ENCODE measurements at regions of chr15 and their contacts with region 1.

Region 1: DNA sequence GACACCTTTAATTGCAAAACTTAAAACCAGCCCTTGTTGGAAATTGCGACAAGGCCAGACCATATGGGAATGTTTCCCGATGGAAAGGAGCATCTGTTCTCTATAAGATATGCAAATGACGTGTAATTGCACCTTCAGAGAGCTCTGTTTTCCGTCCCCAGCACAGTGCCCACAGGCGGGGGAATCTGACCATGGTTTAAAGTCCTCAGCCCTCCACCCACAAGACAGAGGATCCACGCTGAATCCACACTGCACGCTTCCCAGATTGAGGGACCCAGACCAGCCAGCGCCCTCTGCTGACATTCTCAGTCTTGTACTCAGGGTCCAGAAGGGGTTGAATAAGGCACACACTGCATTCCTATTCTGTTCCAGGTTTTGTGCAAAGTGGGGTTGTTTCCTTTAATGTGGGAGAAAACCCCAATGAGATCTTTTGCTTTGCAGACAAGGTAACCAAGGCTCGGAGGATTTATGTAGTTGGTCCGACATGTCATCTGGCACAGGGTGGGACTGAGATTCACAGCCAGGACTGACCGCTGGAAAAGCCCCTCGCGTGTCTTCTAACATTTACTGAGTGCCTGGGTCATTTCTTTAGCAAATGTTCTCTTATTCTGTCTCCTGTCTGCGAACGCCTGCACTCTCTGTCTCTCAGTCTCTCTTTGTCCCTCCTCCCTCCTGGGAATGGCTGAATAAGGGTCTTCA is 36.8 kb upstream of the KLHL25 start:
- DNase-seq: peak; percentile 47 to 66
- ATAC-seq: peak; percentile 82 to 94 (median 87)
- H3K4me3 ChIP-seq: no peak overlapping the region
- H3K27ac ChIP-seq: no peak overlapping the region
- H3K4me1 ChIP-seq: peaks cover 0 to under 1% (median 0%) of the 10 kb centered on the region in 9 donors
- H3K27me3 ChIP-seq: peaks cover 0 to 3% (median 0%) of the 10 kb centered on the region in 7 donors
- CTCF ChIP-seq: peak; percentile 37 to 76 (median 65)

Region 2: DNA sequence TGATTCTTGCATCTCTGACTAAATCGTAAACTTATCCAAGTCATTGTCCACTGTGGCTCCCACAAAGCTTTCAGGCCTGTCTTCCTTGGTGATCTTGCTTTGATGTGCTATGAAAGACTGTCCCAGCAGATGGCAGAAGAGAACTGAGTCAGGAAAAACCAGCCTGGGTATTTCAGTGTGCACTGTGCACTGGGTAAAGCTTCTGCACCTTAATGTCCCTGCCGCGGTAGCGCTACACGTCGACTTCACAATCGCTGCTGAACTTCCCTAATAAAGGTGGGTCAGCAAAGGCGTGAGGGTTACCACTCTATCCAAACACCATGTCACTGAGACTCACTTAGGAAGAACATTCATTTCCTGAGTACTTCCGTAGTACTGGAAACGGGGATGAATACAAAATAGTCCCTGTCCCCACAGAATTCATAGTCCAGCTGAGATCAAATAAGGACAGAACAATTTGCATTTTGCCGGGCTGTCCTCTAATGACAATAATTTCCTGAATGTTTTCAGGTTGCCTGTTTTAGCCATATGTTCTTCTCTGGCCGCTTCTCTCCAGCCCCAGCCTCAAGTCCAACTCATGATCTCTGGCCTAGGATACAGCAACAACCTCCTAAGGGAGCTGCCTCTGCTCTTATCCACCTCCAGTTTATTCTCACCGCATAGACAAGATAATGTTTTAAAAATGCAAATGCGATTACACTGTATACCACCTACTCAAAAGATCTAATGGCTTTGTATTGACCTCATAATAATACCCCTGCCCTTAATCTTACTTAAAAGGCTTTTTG is 534.8 kb before region 1 on chr15:
- intact Hi-C with region 1: loop called in 4 of 10 experiments (anchors 5 to 10 kb)
- DNase-seq: peak; percentile 32 to 73
- ATAC-seq: peak; percentile 80 to 95 (median 92)
- H3K4me3 ChIP-seq: peak overlapping the region in 9 of 10 donors; percentile 10 to 46 (median 42)
- H3K27ac ChIP-seq: peak overlapping the region in 7 of 10 donors; percentile 7 to 39 (median 25)
- H3K4me1 ChIP-seq: peaks cover 0 to 15% (median 10%) of the 10 kb centered on the region in 9 donors
- H3K27me3 ChIP-seq: no peaks in the 10 kb centered on the region
- CTCF ChIP-seq: peak; percentile 49 to 85 (median 80)

Region 3: DNA sequence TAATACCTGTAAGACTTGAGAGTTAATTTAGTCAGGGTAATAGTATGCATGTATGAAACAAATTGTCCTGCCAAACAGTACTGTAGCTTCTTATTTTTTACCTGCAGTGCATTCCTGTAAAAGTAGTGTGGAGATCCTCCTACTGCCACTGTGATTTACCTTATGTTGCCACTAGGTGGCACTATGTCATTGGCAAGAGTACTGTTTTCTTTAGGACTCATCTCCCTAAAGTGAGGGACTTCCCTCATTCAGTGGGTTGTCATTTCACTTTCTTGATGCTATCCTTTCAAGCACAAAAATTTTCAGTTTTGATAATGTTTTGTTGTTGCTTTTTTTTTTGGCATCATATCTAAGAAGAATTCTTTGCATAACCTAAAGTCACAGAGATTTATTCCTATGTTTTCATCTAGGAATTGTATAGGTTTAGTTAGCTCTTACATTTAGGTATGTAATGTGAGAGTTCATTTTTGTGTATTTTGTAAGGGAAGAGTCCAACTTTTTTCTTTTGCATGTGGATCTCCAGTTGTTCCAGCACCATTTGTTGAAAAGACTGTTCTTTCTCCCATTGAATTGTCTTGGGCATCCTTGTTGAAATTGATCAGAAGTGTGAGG is 345.5 kb before region 1 on chr15:
- intact Hi-C with region 1: loop called in 4 of 10 experiments (anchors 10 kb)
- DNase-seq: peak in 1 of 2 donors; percentile 67
- ATAC-seq: peak; percentile 54 to 83 (median 76)
- H3K4me3 ChIP-seq: no peak overlapping the region
- H3K27ac ChIP-seq: peak overlapping the region in 1 of 10 donors; percentile 0
- H3K4me1 ChIP-seq: peaks cover 0 to 76% (median 51%) of the 10 kb centered on the region in 9 donors
- H3K27me3 ChIP-seq: no peaks in the 10 kb centered on the region
- CTCF ChIP-seq: peak; percentile 63 to 91 (median 82)

Region 4: GRCh38 chr15:85592148-85592547 is 239.4 kb before region 1 on chr15:
- intact Hi-C with region 1: loop called in 1 of 10 experiments (anchors 10 kb)
- DNase-seq: no peak
- ATAC-seq: peak in 7 of 8 donors; percentile 62 to 80 (median 68)
- H3K4me3 ChIP-seq: no peak overlapping the region
- H3K27ac ChIP-seq: peak overlapping the region in 9 of 10 donors; percentile 20 to 72 (median 59)
- H3K4me1 ChIP-seq: peaks cover 9 to 96% (median 80%) of the 10 kb centered on the region in 9 donors
- H3K27me3 ChIP-seq: no peaks in the 10 kb centered on the region
- CTCF ChIP-seq: peak in 7 of 9 donors; percentile 15 to 61 (median 39)

Region 5: DNA sequence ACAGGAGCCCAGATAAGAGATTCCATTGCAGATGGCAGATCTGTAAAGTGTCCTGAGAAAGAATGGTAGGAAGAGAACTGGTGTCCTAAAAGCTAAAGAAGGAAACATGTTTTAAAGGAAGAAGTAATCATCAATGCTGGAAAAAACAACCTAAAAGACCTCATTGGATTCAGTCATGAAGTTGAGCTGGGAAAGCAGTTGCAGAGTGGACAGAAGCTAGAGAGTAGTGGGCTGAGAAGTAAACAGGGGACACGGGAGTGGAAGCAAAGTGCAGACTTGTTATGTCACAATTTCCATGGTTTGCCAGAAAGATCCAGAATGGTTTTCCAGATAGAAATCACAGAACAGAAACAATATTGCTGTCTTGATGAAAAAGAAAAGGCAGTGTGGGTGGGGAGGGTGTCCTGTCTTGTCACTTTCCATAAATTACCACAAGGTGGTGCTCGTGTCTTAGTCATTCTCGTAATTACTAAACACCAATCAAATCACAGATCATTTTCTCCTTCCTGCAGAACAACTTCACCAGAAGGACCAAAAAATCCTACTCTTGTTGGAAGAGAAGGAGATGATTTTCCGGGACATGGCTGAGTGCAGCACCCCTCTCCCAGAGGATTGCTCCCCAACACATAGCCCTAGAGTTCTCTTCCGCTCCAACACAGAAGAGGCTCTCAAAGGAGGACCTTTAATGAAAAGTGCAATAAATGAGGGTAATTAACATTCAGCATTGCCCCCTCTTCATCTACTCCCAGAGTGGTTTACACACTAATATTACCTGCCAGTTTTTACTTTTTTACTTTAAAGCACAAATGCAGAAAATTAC is 101.4 kb before region 1 on chr15:
- intact Hi-C with region 1: loop called in 8 of 10 experiments (anchors 2 to 5 kb)
- DNase-seq: peak in 1 of 2 donors; percentile 60
- ATAC-seq: peak; percentile 35 to 74 (median 56)
- H3K4me3 ChIP-seq: no peak overlapping the region
- H3K27ac ChIP-seq: peak overlapping the region in 4 of 10 donors; percentile 5 to 78 (median 38)
- H3K4me1 ChIP-seq: peaks cover 0 to 34% (median 22%) of the 10 kb centered on the region in 9 donors
- H3K27me3 ChIP-seq: no peaks in the 10 kb centered on the region
- CTCF ChIP-seq: peak; percentile 54 to 81 (median 75)

Region 6: DNA sequence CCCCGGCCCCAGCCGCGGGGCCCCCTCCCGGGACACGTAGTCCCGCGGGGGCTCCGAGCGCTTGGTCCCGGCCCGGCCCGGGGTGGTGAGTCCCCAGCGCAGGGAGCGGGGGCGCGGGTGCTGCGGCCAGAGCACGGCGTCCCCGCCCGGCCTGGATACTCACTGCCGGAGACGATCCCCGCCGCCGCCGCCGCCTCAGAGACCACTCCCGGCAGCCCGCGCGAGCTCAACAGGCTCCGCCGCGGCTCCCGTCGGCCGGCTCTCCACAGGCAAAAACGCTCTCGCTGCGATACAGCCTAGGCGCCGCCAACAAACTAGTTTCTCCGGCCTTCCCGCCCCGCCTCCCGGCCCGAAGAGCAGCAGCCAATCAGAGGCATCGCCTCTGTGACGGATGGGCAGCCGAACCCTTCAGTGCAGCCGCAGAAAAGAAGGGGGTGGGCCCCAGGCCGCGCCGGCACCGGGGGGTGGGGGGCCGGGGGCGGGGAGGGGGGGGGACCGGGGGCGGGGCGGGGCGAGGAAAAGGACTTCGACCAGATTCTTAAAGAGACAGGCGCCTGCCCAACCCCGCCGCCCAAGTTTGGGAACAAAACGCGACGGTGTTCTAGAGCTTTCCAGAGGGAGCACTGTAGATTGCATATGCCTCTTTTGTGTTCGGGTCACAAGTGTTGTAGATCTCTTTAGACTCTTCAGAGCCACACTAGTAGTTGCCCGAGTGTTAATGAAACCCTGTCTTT is 36.8 kb before region 1 on chr15 and contains the start of gene KLHL25:
- intact Hi-C with region 1: loop called in 2 of 10 experiments (anchors 5 kb)
- DNase-seq: peak; percentile 94 to 95
- ATAC-seq: peak; percentile 96 to 98 (median 98)
- H3K4me3 ChIP-seq: peak within 1 kb of the TSS; percentile 73 to 98 (median 89)
- H3K27ac ChIP-seq: peak within 1 kb of the TSS; percentile 52 to 95 (median 90)
- H3K4me1 ChIP-seq: peaks cover 0 to 29% (median 24%) of the 10 kb centered on the region in 9 donors
- H3K27me3 ChIP-seq: peaks cover 0 to 9% (median 0%) of the 10 kb centered on the region in 7 donors
- CTCF ChIP-seq: no peak
- total RNA-seq, gene KLHL25: 1.9 to 4.6 (median 3.2) TPM

Region 7: GRCh38 chr15:85920956-85921355 is 89.4 kb after region 1 on chr15:
- intact Hi-C with region 1: no loop called
- DNase-seq: no peak
- ATAC-seq: no peak
- H3K4me3 ChIP-seq: no peak overlapping the region
- H3K27ac ChIP-seq: no peak overlapping the region
- H3K4me1 ChIP-seq: no peaks in the 10 kb centered on the region
- H3K27me3 ChIP-seq: peaks cover 0 to 29% (median 9%) of the 10 kb centered on the region in 7 donors
- CTCF ChIP-seq: no peak

Region 8: GRCh38 chr15:86021281-86022264 is 190.0 kb after region 1 on chr15:
- intact Hi-C with region 1: no loop called
- DNase-seq: no peak
- ATAC-seq: peak in 1 of 8 donors; percentile 13
- H3K4me3 ChIP-seq: no peak overlapping the region
- H3K27ac ChIP-seq: no peak overlapping the region
- H3K4me1 ChIP-seq: no peaks in the 10 kb centered on the region
- H3K27me3 ChIP-seq: peaks cover 0 to 21% (median 4%) of the 10 kb centered on the region in 7 donors
- CTCF ChIP-seq: no peak

Measured in heart right ventricle (tissue), 16 donors.